HCT116 (cell line): ENCODE measurements at regions of chr10 and their contacts with region 1.

Region 1: DNA sequence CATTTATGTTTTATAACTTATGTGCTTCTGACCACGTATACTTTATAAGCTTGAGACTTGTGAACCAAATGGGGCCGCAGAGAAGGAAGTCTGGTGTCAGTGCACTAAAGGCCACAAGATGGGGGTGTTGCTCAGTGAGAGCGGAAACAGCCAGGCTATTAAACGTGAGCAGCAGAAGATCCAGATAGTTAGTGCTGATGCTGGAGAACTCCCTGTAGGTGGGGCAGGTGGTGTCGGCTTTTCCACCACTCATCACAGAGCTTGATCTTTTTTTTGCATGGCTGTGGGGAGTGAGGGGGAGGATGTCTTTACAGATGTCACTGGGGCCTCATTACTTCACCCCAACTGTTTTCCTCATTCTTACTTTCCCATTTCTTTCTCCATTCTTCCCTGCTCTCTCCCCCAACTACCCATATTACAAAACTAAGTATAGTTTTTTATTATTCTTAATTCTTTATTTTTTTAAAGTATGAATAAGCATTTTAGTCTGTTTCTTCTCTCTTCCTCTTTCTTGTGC is 34.7 kb downstream of the ACADSB start:
- DNase-seq: peak; percentile 80
- ATAC-seq: peak; percentile 99
- H3K4me3 ChIP-seq: no peak overlapping the region
- H3K27ac ChIP-seq: no peak overlapping the region
- H3K4me1 ChIP-seq: no peaks in the 10 kb centered on the region
- H3K27me3 ChIP-seq: no peaks in the 10 kb centered on the region
- CTCF ChIP-seq: peak; percentile 94 to 98 (median 94)
- POLR2A ChIP-seq: no peak
- RAD21 ChIP-seq: peak; percentile 96

Region 2: GRCh38 chr10:122740649-122741048 is 302.8 kb before region 1 on chr10:
- CTCF ChIA-PET with region 1: no interaction called
- POLR2A ChIA-PET with region 1: no interaction called
- RAD21 ChIA-PET with region 1: no interaction called
- intact Hi-C with region 1: no loop called
- DNase-seq: no peak
- ATAC-seq: no peak
- H3K4me3 ChIP-seq: no peak overlapping the region
- H3K27ac ChIP-seq: no peak overlapping the region
- H3K4me1 ChIP-seq: no peaks in the 10 kb centered on the region
- H3K27me3 ChIP-seq: peaks cover 44% of the 10 kb centered on the region
- CTCF ChIP-seq: no peak
- POLR2A ChIP-seq: no peak
- RAD21 ChIP-seq: no peak

Region 3: DNA sequence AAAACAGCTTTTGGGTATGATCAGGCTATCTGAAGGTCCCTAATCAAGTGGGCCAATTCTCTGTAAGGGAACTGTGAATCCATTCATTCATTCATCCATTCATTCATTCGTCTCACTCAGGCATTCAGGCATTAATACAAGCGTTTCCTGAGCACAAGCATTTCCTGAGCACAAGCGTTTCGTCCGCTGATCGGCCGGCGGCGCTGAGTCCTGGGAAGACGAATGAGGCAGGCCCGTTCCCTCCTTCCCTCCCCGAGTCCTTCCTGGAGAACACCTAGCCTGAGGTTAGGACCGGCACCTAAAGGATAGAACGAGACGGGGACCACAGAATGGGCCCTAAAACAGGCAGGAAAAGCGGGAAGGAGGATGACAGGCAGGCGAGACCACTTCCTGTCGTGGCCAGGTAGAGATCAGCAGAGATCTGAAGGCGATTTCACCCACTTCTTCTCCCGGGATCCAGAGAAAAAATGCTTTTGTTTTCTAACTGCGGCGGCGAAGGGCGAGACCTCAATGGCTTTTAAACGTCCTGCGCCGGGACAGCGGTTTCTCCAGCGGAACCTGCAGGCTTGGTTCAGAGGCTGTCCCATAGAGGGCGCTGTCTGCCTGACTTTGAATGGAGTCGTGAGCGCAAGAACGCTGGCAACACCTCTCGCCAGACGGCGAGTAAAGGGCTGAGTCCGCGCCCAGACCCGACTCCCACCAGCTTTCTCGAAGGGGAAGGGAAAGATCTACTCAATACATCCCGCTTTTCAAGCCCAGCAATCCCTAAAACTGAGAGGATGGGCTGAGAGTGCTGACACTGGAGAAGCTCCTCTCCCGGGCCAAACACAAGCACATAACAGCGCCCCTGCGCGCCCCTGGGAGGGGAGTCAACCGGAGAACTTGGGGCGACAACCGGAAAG is 89.4 kb after region 1 on chr10:
- CTCF ChIA-PET with region 1: interaction called, 6 read pairs
- POLR2A ChIA-PET with region 1: no interaction called
- RAD21 ChIA-PET with region 1: no interaction called
- intact Hi-C with region 1: loop called (anchors 2 kb)
- DNase-seq: peak; percentile 81
- ATAC-seq: peak; percentile 95
- H3K4me3 ChIP-seq: peak overlapping the region; percentile 26 to 43
- H3K27ac ChIP-seq: no peak overlapping the region
- H3K4me1 ChIP-seq: peaks cover 0 to 18% of the 10 kb centered on the region in 2 experiments; a peak in 2 of 4 replicates
- H3K27me3 ChIP-seq: no peaks in the 10 kb centered on the region
- CTCF ChIP-seq: peak; percentile 92 to 99 (median 98)
- POLR2A ChIP-seq: no peak
- RAD21 ChIP-seq: peak; percentile 98

Region 4: DNA sequence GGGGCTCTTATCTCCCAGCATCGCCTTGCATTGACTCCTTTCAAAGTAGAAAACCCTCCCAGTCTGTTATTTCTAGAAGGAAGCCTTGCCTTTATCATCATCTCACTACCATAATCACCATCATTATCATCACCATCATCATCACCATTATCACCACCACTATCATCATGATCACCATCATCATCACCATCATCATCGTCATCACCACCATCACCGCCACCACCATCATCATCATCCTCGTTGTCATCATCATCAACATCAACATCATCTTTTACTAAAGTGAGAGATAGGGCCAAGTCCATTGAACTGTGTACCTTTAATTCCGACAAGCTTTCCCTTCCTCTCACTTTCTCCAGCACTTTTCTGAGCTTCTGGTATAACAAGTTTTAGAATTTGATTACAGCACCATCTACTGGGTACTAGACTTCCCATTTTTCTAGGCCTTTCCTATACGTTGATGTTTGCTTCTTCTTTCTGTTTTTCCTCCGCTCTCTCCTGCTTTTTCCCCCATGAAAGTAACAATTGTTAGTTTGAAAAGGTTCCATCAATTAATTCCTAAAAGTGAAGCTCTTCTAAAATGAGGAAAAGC is 337.1 kb after region 1 on chr10:
- CTCF ChIA-PET with region 1: interaction called, 14 read pairs
- POLR2A ChIA-PET with region 1: no interaction called
- RAD21 ChIA-PET with region 1: no interaction called
- intact Hi-C with region 1: loop called (anchors 1 kb)
- DNase-seq: no peak
- ATAC-seq: no peak
- H3K4me3 ChIP-seq: no peak overlapping the region
- H3K27ac ChIP-seq: no peak overlapping the region
- H3K4me1 ChIP-seq: no peaks in the 10 kb centered on the region
- H3K27me3 ChIP-seq: no peaks in the 10 kb centered on the region
- CTCF ChIP-seq: peak; percentile 22 to 59 (median 46); a peak in 4 of 6 replicates
- POLR2A ChIP-seq: no peak
- RAD21 ChIP-seq: peak; percentile 70

Region 5: GRCh38 chr10:123559066-123559822 is 515.8 kb after region 1 on chr10:
- CTCF ChIA-PET with region 1: interaction called, 15 read pairs
- POLR2A ChIA-PET with region 1: no interaction called
- RAD21 ChIA-PET with region 1: interaction called in 1 of 2 experiments, 3 read pairs
- intact Hi-C with region 1: loop called (anchors 1 kb)
- DNase-seq: peak; percentile 60
- ATAC-seq: peak; percentile 97
- H3K4me3 ChIP-seq: no peak overlapping the region
- H3K27ac ChIP-seq: no peak overlapping the region
- H3K4me1 ChIP-seq: 0 out of 4 replicates have a peak, but pooled peaks cover 0 to 3% of the 10 kb centered on the region in 2 experiments
- H3K27me3 ChIP-seq: no peaks in the 10 kb centered on the region
- CTCF ChIP-seq: peak; percentile 95 to 100 (median 100)
- POLR2A ChIP-seq: no peak
- RAD21 ChIP-seq: peak; percentile 99

Region 6: DNA sequence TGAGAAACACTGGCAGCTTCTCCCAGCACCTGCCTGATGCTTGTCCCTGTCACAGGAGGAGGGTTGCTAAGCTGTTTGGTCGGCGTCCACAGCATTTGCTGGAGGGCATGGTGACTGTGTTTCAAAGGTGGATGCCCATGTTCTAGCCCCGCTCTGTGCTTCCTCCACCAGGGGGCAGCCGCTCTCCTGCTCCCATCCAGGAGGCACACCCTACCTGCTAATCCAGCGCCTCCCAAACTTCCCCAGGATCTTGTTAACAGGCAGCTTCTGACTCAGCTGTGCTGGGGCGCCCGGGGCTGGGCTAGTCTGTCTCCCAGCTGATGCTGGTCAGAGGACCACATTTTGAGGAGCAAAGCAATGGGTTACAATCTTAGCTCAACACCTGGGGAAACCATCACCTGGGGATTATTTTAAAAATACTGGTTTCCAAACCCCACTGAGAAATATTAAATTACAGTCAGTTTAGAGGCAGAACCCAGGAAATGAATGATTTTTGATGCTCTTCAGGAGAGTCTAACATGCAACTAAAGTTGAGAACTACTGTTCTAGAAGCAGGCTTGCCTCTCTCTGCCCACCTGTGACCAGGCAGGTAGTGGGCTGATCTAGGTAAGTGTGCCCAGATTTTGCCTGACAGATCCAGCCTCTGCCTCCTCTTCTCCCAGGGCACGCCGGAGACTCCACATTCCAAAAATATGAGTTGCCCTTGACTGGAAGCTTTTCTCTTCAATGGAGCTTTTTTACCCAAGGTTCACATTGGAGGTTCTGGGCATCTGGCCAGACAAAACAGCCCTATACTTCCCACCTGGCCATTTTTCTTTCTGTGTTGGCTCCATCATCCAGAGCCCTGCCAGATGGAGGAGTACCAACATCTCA is 530.0 kb after region 1 on chr10:
- CTCF ChIA-PET with region 1: interaction called, 23 read pairs
- POLR2A ChIA-PET with region 1: no interaction called
- RAD21 ChIA-PET with region 1: no interaction called
- intact Hi-C with region 1: no loop called
- DNase-seq: peak; percentile 83
- ATAC-seq: peak; percentile 97
- H3K4me3 ChIP-seq: peak overlapping the region in 1 of 2 experiments; percentile 23; a peak in 2 of 4 replicates
- H3K27ac ChIP-seq: peak overlapping the region; percentile 8; the same call in 1 of the 2 replicates
- H3K4me1 ChIP-seq: peaks cover 11 to 20% of the 10 kb centered on the region in 2 experiments
- H3K27me3 ChIP-seq: peaks cover 19% of the 10 kb centered on the region; the same call in 1 of the 2 replicates
- CTCF ChIP-seq: peak; percentile 89 to 99 (median 98)
- POLR2A ChIP-seq: no peak
- RAD21 ChIP-seq: peak; percentile 83

Region 7: GRCh38 chr10:123967396-123968243 is 924.2 kb after region 1 on chr10:
- CTCF ChIA-PET with region 1: no interaction called
- POLR2A ChIA-PET with region 1: no interaction called
- RAD21 ChIA-PET with region 1: no interaction called
- intact Hi-C with region 1: loop called (anchors 2 kb)
- DNase-seq: peak; percentile 49
- ATAC-seq: peak; percentile 96
- H3K4me3 ChIP-seq: no peak overlapping the region
- H3K27ac ChIP-seq: no peak overlapping the region
- H3K4me1 ChIP-seq: peaks cover 0 to 10% of the 10 kb centered on the region in 2 experiments; a peak in 1 of 4 replicates
- H3K27me3 ChIP-seq: peaks cover 21% of the 10 kb centered on the region
- CTCF ChIP-seq: peak; percentile 96 to 99 (median 99)
- POLR2A ChIP-seq: no peak
- RAD21 ChIP-seq: peak; percentile 99